CD14-positive monocyte (primary cell): ENCODE measurements at regions of chr22 and their contacts with region 1.

Region 1: DNA sequence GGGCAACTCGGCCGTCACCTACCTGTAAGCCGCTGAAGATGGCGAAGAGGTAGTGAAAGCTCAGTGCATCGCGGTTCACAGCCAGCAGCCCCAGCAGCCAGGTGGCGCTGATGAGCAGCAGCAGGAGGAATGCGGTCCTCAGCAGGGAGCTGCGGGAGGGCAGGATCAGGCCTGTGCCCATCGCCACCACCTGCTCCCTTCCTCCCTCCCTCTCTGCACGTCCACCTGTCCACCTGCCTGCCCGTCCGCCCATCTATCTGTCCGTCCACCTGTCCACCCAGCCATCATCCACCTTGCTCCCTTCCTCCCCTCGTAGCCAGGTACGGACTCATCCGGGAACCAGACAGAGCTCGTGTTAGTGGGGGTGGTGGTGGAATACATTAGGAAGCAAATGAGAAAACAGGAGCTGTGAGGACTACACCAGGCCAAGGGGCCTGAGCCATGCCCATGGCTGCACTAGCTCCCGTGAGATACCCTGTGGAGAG is 32.2 kb downstream of the TRMU start:
- DNase-seq: peak; percentile 23 to 51 (median 47)
- H3K4me3 ChIP-seq: no peak overlapping the region
- H3K4me3 Mint-ChIP-seq: no peak overlapping the region
- H3K27ac ChIP-seq: no peak overlapping the region
- H3K27ac Mint-ChIP-seq: peak overlapping the region in 1 of 7 donors; percentile 11
- H3K4me1 ChIP-seq: no peaks in the 10 kb centered on the region
- H3K4me1 Mint-ChIP-seq: peaks cover 3% of the 10 kb centered on the region
- H3K27me3 ChIP-seq: peaks cover 0 to 10% of the 10 kb centered on the region in 2 donors
- H3K27me3 Mint-ChIP-seq: peaks cover 0 to 15% (median 14%) of the 10 kb centered on the region in 3 donors
- CTCF ChIP-seq: peak; percentile 91

Region 2: GRCh38 chr22:46087336-46088277 is 280.1 kb before region 1 on chr22:
- intact Hi-C with region 1: no loop called
- DNase-seq: no peak
- H3K4me3 ChIP-seq: no peak overlapping the region
- H3K4me3 Mint-ChIP-seq: no peak overlapping the region
- H3K27ac ChIP-seq: no peak overlapping the region
- H3K27ac Mint-ChIP-seq: peak overlapping the region in 1 of 7 donors; percentile 10
- H3K4me1 ChIP-seq: no peaks in the 10 kb centered on the region
- H3K4me1 Mint-ChIP-seq: no peaks in the 10 kb centered on the region
- H3K27me3 ChIP-seq: no peaks in the 10 kb centered on the region
- H3K27me3 Mint-ChIP-seq: no peaks in the 10 kb centered on the region
- CTCF ChIP-seq: no peak

Region 3: GRCh38 chr22:46180370-46181137 is 187.2 kb before region 1 on chr22:
- intact Hi-C with region 1: no loop called
- DNase-seq: no peak
- H3K4me3 ChIP-seq: no peak overlapping the region
- H3K4me3 Mint-ChIP-seq: no peak overlapping the region
- H3K27ac ChIP-seq: no peak overlapping the region
- H3K27ac Mint-ChIP-seq: no peak overlapping the region
- H3K4me1 ChIP-seq: no peaks in the 10 kb centered on the region
- H3K4me1 Mint-ChIP-seq: peaks cover 7% of the 10 kb centered on the region
- H3K27me3 ChIP-seq: no peaks in the 10 kb centered on the region
- H3K27me3 Mint-ChIP-seq: peaks cover 0 to 4% (median 1%) of the 10 kb centered on the region in 3 donors
- CTCF ChIP-seq: no peak

Region 4: GRCh38 chr22:46267431-46268279 is 100.1 kb before region 1 on chr22 and contains the start of gene TTC38:
- intact Hi-C with region 1: no loop called
- DNase-seq: peak; percentile 53 to 61 (median 58)
- H3K4me3 ChIP-seq: peak within 1 kb of the TSS; percentile 68 to 89 (median 74)
- H3K4me3 Mint-ChIP-seq: peak within 1 kb of the TSS; percentile 92 to 93
- H3K27ac ChIP-seq: peak within 1 kb of the TSS in 1 of 2 donors; percentile 73
- H3K27ac Mint-ChIP-seq: peak within 1 kb of the TSS in 4 of 7 donors; percentile 41 to 76 (median 72)
- H3K4me1 ChIP-seq: peaks cover 14 to 29% of the 10 kb centered on the region in 2 donors
- H3K4me1 Mint-ChIP-seq: peaks cover 22% of the 10 kb centered on the region
- H3K27me3 ChIP-seq: peaks cover 0 to 8% of the 10 kb centered on the region in 2 donors
- H3K27me3 Mint-ChIP-seq: peaks cover 14 to 21% (median 17%) of the 10 kb centered on the region in 3 donors
- CTCF ChIP-seq: no peak
- polyA plus RNA-seq, gene TTC38: 14.7 to 22.5 (median 17.0) TPM

Region 5: DNA sequence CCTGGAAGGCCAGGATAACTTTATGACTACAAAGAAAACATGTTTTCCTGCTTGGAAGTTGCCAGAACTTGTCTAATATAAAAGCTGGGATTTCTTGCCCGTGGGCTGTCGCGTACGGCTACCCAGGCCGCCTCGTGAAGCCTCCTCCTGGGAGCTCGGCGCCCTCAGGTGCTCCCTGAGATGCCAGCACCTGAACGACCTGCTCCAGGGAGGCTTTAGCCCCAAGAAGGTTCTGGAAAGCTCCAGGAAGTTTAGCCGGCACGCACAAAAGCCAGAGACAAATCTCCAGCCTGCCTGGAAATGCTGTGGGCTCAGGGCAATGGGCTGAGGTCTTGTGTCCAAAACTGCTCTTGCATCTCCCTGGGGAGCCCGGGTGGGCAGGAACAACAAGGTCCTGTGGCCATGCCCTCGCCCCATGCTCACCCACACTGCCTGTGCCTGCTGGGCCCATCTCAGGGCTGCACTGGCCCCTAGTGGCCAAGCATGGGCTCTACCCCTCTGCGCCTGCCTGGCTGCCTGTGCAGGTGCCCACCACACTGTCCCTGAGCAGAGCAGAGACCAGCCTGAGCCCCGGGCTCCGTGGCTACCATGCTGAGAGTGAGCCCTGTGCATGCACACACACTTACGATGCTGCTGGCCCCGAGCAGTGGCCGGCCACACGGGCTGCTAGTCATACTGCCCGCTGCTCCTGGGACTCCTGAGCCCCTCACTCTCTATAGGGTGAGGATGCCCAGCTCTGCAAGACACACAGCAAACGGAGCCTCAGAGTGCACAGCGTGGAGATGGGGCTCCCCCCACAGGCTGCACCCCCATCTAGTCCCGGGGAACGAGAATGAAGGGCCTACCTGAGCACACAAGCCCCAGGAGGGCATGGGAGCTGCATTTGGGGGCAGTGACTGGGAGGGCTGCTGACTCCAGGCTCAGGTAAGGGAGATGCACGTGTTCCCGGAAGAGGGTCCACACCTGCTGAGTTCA is 174.5 kb after region 1 on chr22:
- intact Hi-C with region 1: loop called (anchors 1 kb)
- DNase-seq: peak; percentile 52 to 70 (median 69)
- H3K4me3 ChIP-seq: no peak overlapping the region
- H3K4me3 Mint-ChIP-seq: no peak overlapping the region
- H3K27ac ChIP-seq: no peak overlapping the region
- H3K27ac Mint-ChIP-seq: no peak overlapping the region
- H3K4me1 ChIP-seq: peaks cover 10 to 16% of the 10 kb centered on the region in 2 donors
- H3K4me1 Mint-ChIP-seq: peaks cover 24% of the 10 kb centered on the region
- H3K27me3 ChIP-seq: peaks cover 19 to 32% of the 10 kb centered on the region in 2 donors
- H3K27me3 Mint-ChIP-seq: peaks cover 33 to 47% (median 42%) of the 10 kb centered on the region in 3 donors
- CTCF ChIP-seq: peak; percentile 99

Region 6: GRCh38 chr22:47605441-47605840 is 1237.7 kb after region 1 on chr22:
- intact Hi-C with region 1: no loop called
- DNase-seq: no peak
- H3K4me3 ChIP-seq: no peak overlapping the region
- H3K4me3 Mint-ChIP-seq: no peak overlapping the region
- H3K27ac ChIP-seq: no peak overlapping the region
- H3K27ac Mint-ChIP-seq: no peak overlapping the region
- H3K4me1 ChIP-seq: no peaks in the 10 kb centered on the region
- H3K4me1 Mint-ChIP-seq: no peaks in the 10 kb centered on the region
- H3K27me3 ChIP-seq: no peaks in the 10 kb centered on the region
- H3K27me3 Mint-ChIP-seq: peaks cover 0 to 10% (median 3%) of the 10 kb centered on the region in 3 donors
- CTCF ChIP-seq: no peak